ENCODE measurements at regions of chr1 and their contacts with region 1.

Region 1: GRCh38 chr1:2194898-2195673 is 514 bp upstream of the FAAP20 start:
- DNase-seq: peak; percentile 81 to 100 (median 88)
- ATAC-seq: peak; percentile 81 to 82
- H3K4me3 Mint-ChIP-seq: peak overlapping the region; percentile 75 to 91 (median 85)
- H3K27ac Mint-ChIP-seq: peak overlapping the region; percentile 53 to 97 (median 92)
- H3K4me1 Mint-ChIP-seq: peaks cover 5 to 46% (median 33%) of the 10 kb centered on the region in 4 donors
- H3K27me3 Mint-ChIP-seq: no peaks in the 10 kb centered on the region

Region 2: GRCh38 chr1:2126331-2127186 is 68.5 kb before region 1 on chr1:
- POLR2A ChIA-PET with region 1: no interaction called
- DNase-seq: peak in 2 of 10 donors; percentile 37 to 65
- ATAC-seq: peak; percentile 76 to 82
- H3K4me3 Mint-ChIP-seq: peak overlapping the region; percentile 54 to 92 (median 84)
- H3K27ac Mint-ChIP-seq: peak overlapping the region; percentile 70 to 93 (median 90)
- H3K4me1 Mint-ChIP-seq: peaks cover 11 to 30% (median 24%) of the 10 kb centered on the region in 4 donors
- H3K27me3 Mint-ChIP-seq: no peaks in the 10 kb centered on the region

Region 3: GRCh38 chr1:2137257-2138121 is 57.6 kb before region 1 on chr1:
- POLR2A ChIA-PET with region 1: no interaction called
- DNase-seq: peak in 2 of 10 donors; percentile 28 to 48
- ATAC-seq: no peak
- H3K4me3 Mint-ChIP-seq: peak overlapping the region in 3 of 10 donors; percentile 37 to 71 (median 51)
- H3K27ac Mint-ChIP-seq: peak overlapping the region in 7 of 10 donors; percentile 63 to 91 (median 83)
- H3K4me1 Mint-ChIP-seq: peaks cover 13 to 59% (median 39%) of the 10 kb centered on the region in 4 donors
- H3K27me3 Mint-ChIP-seq: no peaks in the 10 kb centered on the region

Region 4: GRCh38 chr1:2181263-2181662 is 13.8 kb before region 1 on chr1:
- POLR2A ChIA-PET with region 1: no interaction called
- DNase-seq: no peak
- ATAC-seq: no peak
- H3K4me3 Mint-ChIP-seq: no peak overlapping the region
- H3K27ac Mint-ChIP-seq: no peak overlapping the region
- H3K4me1 Mint-ChIP-seq: peaks cover 0 to 6% (median 3%) of the 10 kb centered on the region in 4 donors
- H3K27me3 Mint-ChIP-seq: no peaks in the 10 kb centered on the region

Region 5: DNA sequence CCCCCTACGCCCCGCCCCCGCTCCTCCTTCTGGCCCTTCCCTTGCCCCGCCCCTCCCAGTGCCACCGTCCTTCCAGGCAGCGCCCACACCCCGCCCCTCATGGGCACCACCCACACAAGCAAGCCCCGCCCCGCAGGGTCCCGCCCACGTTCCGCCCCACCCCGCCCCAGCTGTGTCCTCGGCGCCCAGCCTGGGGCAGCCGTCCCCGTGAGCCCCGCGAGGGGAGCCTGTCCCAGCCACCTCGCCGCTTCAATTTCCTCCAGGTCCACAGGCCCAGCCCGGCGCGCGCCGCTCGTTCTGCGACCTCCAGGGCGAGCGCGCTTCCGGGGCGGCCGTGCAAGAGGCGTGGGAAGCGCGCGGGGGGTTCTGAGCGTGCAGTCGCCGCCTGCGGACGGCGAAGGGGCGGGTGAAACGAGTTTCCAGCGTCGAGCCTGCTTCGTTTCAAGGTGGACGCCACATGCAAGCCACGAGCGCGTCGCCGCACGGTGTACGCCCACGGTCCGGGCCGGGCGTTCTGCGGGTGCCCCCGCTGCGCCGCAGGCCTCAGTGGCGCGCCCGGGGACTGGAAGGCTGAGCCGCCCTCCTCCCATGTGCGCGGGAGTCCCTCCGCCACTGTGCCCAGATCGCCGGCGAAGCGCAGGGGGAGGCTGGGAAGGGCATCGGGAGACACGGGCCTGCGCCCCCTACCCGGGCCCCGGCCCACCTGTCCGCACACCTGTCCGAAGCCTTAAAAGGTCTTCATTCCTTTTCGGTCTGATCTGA is 10.3 kb after region 1 on chr1:
- POLR2A ChIA-PET with region 1: interaction called, 25 read pairs
- DNase-seq: peak in 9 of 10 donors; percentile 87 to 98 (median 93)
- ATAC-seq: peak; percentile 83 to 91
- H3K4me3 Mint-ChIP-seq: peak overlapping the region; percentile 50 to 78 (median 65)
- H3K27ac Mint-ChIP-seq: peak overlapping the region in 3 of 10 donors; percentile 20 to 69 (median 53)
- H3K4me1 Mint-ChIP-seq: peaks cover 0 to 22% (median 13%) of the 10 kb centered on the region in 4 donors
- H3K27me3 Mint-ChIP-seq: no peaks in the 10 kb centered on the region

Region 6: GRCh38 chr1:2227346-2228153 is 32.5 kb after region 1 on chr1:
- POLR2A ChIA-PET with region 1: interaction called, 303 read pairs
- DNase-seq: peak; percentile 90 to 96 (median 94)
- ATAC-seq: peak; percentile 75
- H3K4me3 Mint-ChIP-seq: peak overlapping the region in 9 of 10 donors; percentile 30 to 88 (median 61)
- H3K27ac Mint-ChIP-seq: peak overlapping the region in 5 of 10 donors; percentile 33 to 92 (median 62)
- H3K4me1 Mint-ChIP-seq: peaks cover 22 to 39% (median 25%) of the 10 kb centered on the region in 4 donors
- H3K27me3 Mint-ChIP-seq: no peaks in the 10 kb centered on the region

Region 7: DNA sequence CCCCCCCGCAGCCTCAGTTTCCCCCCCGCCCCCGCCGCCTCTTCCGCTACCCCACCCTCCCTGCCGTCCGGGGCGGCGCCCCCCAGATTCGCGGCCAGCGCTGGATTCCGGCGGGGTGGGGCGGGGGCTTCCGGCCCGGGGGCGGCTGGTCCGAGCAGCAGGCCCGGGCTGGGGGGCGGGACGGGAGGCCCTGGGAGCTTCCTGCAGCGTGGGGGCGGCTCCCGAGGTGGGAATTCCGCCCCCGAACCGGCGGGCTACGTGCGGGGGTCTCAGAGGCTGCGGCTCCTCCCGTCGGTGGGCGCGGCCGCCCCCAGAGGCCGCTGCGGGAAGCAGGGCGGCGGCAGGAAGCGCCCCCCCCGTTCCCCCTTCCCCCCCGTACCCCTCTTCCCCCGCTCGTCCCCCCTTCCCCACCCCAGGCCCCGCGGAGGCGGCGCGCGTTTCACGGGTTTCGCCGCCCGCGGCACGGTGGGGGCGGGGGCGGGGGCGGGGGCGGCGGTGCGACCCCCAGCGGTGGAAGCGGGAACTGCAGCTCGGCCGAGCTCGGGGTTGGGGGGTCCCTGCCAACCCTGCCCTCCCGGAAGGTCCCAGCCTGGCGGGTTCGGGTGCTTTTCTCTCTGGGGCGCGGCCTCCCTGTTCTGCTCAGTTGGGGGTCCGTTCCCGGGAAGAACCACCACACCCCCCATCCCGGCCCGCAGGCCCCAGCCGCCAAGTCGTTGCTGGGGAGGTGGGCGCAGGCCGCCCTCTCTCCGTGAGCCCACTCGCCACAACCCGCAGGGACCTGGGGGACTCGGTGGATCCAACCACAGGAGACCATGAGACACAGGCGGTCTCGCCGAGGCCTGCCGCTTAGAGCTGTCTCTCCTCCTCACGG is 120.0 kb after region 1 on chr1:
- POLR2A ChIA-PET with region 1: interaction called, 22 read pairs
- DNase-seq: peak; percentile 65 to 86 (median 76)
- ATAC-seq: peak; percentile 44 to 62
- H3K4me3 Mint-ChIP-seq: peak overlapping the region; percentile 36 to 77 (median 69)
- H3K27ac Mint-ChIP-seq: peak overlapping the region in 9 of 10 donors; percentile 48 to 92 (median 85)
- H3K4me1 Mint-ChIP-seq: peaks cover 4 to 47% (median 30%) of the 10 kb centered on the region in 4 donors
- H3K27me3 Mint-ChIP-seq: no peaks in the 10 kb centered on the region

Region 8: GRCh38 chr1:2381741-2382620 is 186.9 kb after region 1 on chr1:
- POLR2A ChIA-PET with region 1: interaction called, 60 read pairs
- DNase-seq: peak; percentile 54 to 86 (median 74)
- ATAC-seq: peak; percentile 96 to 98
- H3K4me3 Mint-ChIP-seq: no peak overlapping the region
- H3K27ac Mint-ChIP-seq: peak overlapping the region in 1 of 10 donors; percentile 38
- H3K4me1 Mint-ChIP-seq: peaks cover 0 to 6% (median 2%) of the 10 kb centered on the region in 4 donors
- H3K27me3 Mint-ChIP-seq: no peaks in the 10 kb centered on the region

Region 9: GRCh38 chr1:2391041-2391930 is 196.2 kb after region 1 on chr1 and contains the starts of genes MORN1 and RER1:
- POLR2A ChIA-PET with region 1: interaction called, 11 read pairs
- DNase-seq: peak; percentile 90 to 100 (median 99)
- ATAC-seq: peak; percentile 95 to 96
- H3K4me3 Mint-ChIP-seq: peak within 1 kb of the TSS; percentile 82 to 94 (median 90)
- H3K27ac Mint-ChIP-seq: peak within 1 kb of the TSS; percentile 87 to 94 (median 92)
- H3K4me1 Mint-ChIP-seq: peaks cover 22 to 43% (median 37%) of the 10 kb centered on the region in 4 donors
- H3K27me3 Mint-ChIP-seq: no peaks in the 10 kb centered on the region
- polyA plus RNA-seq, gene MORN1: 4.3 to 7.1 (median 5.0) TPM
- polyA plus RNA-seq, gene RER1: 118 to 146 (median 126) TPM